Pancreas (tissue), 10 donors: ENCODE measurements at regions of chr6 and their contacts with region 1.

Region 1: DNA sequence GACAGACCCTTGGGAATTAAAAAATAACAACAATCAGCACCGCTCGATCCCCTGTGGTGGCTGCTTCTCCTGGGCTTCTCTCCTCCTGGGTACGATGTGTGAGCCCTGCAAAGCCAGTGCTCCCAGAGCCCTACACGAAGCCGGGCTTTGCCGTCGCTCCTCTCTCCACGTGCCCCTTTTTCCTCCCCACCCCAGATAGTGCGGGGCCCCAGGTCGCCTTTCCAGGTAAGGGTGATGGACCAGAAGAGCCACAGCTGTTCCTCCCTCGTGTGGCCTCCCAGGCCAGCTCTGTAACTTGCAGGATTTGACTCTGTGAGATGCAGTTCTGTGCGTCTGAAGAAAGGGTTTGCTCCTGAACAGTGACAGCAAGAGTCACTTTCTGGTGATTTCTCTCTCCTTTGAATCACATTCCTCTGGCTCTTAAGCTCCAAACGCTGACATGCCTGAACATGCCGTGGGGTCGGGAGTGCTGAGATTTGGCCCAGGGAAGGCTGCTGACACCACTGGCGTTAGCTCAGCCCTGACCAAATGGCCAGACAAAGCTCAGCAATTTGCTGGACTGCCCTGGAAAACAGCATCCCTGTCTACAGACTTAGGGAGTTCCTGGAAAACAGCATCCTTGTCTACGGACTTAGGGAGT is 59.2 kb downstream of the DLL1 start:
- DNase-seq: peak in 2 of 6 donors; percentile 10 to 45
- ATAC-seq: no peak
- H3K4me3 ChIP-seq: no peak overlapping the region
- H3K27ac ChIP-seq: no peak overlapping the region
- H3K4me1 ChIP-seq: peaks cover 18% of the 10 kb centered on the region in 3 donors
- H3K27me3 ChIP-seq: no peaks in the 10 kb centered on the region
- CTCF ChIP-seq: no peak

Region 2: DNA sequence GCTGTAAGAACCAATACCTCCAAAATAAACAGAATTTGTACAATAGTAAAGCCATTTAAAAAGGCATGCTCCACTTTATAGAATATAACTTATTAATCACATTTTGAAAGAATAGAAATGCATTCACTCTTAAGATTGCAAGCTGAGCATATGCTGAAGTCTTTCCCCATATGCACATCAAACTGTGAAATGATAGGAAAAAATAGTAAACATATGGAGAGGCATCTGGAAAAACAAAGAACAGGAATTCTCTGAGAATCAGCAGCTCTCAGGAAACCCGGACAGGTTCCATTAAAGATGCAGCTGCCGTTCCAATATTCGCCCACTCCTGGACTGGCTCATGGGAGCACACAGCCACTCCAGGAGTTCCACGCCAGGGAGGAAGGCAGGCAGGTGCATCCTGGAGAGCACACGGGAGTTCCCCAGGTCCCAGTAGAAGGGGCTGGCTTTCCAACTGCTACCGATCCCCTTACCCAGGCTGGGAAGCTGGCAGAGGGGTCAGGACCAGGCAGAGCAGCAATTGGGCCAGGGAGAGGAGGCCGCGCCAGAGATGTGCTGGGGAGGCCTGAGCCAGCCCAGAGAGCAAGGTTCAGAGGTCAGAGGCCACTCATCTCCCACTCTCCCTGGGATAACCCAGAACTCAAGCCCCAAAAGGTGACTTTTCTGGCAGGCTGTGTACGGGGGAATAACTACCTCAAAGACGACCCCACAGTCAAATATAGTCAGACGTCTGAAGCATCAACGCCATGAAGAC is 51.9 kb before region 1 on chr6:
- intact Hi-C with region 1: loop called in 1 of 3 experiments (anchors 5 kb)
- DNase-seq: peak in 3 of 6 donors; percentile 11 to 45 (median 43)
- ATAC-seq: no peak
- H3K4me3 ChIP-seq: no peak overlapping the region
- H3K27ac ChIP-seq: peak overlapping the region in 3 of 4 donors; percentile 12 to 64 (median 18)
- H3K4me1 ChIP-seq: peaks cover 6 to 10% (median 8%) of the 10 kb centered on the region in 3 donors
- H3K27me3 ChIP-seq: no peaks in the 10 kb centered on the region
- CTCF ChIP-seq: no peak